ENCODE measurements at regions of chr10 and their contacts with region 1.

Region 1: GRCh38 chr10:93488956-93489528 is 6.9 kb upstream of the MYOF start:
- DNase-seq: no peak
- ATAC-seq: no peak; the same call in 1 of the 2 replicates
- H3K4me3 Mint-ChIP-seq: no peak overlapping the region
- H3K27ac Mint-ChIP-seq: no peak overlapping the region
- H3K4me1 Mint-ChIP-seq: no peaks in the 10 kb centered on the region; the same call in 1 of the 2 replicates
- H3K27me3 Mint-ChIP-seq: peaks cover 4% of the 10 kb centered on the region; the same call in 1 of the 2 replicates
- CTCF ChIP-seq: no peak

Region 2: DNA sequence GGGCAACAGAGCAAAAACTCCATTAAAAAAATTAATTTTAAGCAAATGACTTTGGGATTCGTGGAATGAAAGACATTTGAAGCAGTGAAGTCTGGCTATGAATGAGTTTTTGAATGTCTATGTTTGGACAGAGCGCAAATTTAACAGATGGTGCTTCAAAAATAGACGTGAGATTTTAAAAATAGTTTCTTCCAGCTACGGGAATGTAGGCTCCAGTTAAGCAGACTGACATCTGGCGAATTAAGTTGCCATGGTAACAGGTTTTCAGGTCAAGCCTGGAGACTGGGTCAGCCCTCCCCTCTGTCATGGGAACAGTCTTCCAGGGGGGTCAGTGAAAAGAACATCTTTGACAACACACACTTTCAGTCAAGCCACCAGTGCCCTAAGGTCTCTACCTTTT is 69.0 kb before region 1 on chr10:
- CTCF ChIA-PET with region 1: no interaction called
- POLR2A ChIA-PET with region 1: no interaction called
- DNase-seq: no peak
- ATAC-seq: peak; percentile 32
- H3K4me3 Mint-ChIP-seq: no peak overlapping the region
- H3K27ac Mint-ChIP-seq: peak overlapping the region; percentile 52; the same call in 1 of the 2 replicates
- H3K4me1 Mint-ChIP-seq: peaks cover 39% of the 10 kb centered on the region
- H3K27me3 Mint-ChIP-seq: no peaks in the 10 kb centered on the region
- CTCF ChIP-seq: no peak

Region 3: DNA sequence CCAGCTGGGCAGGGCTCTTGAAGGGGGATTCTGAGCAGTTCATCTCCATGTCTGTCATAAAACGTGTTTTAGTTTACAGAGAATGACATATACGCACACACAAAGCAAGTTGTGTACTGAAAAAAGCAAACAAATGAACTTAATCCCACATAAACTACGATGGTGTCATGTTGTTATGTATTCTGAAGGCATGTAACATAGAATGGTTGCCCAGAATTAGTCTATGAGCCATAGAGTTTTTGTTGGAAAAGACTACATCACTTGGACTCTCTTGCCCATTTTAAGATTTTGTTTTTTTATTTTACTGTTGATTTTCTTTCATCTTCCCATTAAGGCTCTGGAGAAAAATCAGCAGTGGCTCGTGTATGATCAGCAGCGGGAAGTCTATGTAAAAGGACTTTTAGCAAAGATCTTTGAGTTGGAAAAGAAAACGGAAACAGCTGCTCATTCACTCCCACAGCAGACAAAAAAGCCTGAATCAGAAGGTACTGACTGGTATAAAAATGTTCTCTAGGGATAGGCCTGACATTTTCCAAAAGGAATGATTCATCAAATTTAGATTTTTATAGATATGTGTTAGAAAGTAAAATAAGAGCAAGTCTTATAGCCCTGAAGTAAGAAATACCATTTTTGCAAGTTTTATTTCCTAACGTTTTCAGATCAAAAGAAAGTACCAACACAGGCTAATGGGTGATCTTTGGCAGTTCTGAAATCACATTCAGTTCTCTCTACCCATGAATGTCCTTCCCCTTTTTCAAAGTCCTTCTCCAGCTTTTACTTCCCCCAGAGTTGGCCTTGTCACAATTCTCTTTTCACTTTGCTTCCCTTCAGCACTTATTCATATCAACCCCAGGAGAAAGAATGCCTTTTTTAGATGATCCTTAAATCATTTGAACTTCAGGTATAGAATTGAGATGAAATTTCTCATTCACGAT is 26.3 kb after region 1 on chr10:
- CTCF ChIA-PET with region 1: interaction called, 30 read pairs
- POLR2A ChIA-PET with region 1: no interaction called
- DNase-seq: no peak
- ATAC-seq: no peak
- H3K4me3 Mint-ChIP-seq: no peak overlapping the region
- H3K27ac Mint-ChIP-seq: no peak overlapping the region
- H3K4me1 Mint-ChIP-seq: peaks cover 5% of the 10 kb centered on the region
- H3K27me3 Mint-ChIP-seq: no peaks in the 10 kb centered on the region
- CTCF ChIP-seq: no peak

Region 4: DNA sequence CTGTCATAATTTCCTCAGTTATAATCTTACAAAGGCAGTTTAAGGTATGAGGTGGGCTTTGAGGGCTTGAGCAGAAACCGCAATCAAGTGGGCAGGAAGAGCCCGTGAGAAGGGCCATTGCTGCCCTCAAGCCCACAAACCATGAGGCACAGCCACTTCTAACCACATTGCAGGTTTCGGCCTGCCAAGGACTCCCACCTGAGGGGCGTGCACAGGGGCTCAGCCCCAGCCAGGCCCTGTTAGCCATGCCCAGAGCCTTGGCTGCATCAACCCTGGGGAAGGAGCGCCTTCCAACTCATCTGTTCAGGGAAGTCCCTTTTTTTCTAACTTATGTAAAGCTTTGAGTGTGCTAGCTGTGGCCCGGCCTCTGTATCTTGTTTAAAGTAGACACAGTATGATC is 71.5 kb after region 1 on chr10:
- CTCF ChIA-PET with region 1: no interaction called
- POLR2A ChIA-PET with region 1: no interaction called
- DNase-seq: no peak
- ATAC-seq: no peak
- H3K4me3 Mint-ChIP-seq: no peak overlapping the region
- H3K27ac Mint-ChIP-seq: no peak overlapping the region
- H3K4me1 Mint-ChIP-seq: peaks cover 4% of the 10 kb centered on the region; the same call in 1 of the 2 replicates
- H3K27me3 Mint-ChIP-seq: peaks cover 29% of the 10 kb centered on the region
- CTCF ChIP-seq: no peak

Region 5: GRCh38 chr10:93600446-93601145 is 111.6 kb after region 1 on chr10:
- CTCF ChIA-PET with region 1: no interaction called
- POLR2A ChIA-PET with region 1: no interaction called
- DNase-seq: peak; percentile 29
- ATAC-seq: peak; percentile 12
- H3K4me3 Mint-ChIP-seq: peak overlapping the region; percentile 70
- H3K27ac Mint-ChIP-seq: no peak overlapping the region
- H3K4me1 Mint-ChIP-seq: peaks cover 11% of the 10 kb centered on the region
- H3K27me3 Mint-ChIP-seq: peaks cover 58% of the 10 kb centered on the region
- CTCF ChIP-seq: no peak

Region 6: DNA sequence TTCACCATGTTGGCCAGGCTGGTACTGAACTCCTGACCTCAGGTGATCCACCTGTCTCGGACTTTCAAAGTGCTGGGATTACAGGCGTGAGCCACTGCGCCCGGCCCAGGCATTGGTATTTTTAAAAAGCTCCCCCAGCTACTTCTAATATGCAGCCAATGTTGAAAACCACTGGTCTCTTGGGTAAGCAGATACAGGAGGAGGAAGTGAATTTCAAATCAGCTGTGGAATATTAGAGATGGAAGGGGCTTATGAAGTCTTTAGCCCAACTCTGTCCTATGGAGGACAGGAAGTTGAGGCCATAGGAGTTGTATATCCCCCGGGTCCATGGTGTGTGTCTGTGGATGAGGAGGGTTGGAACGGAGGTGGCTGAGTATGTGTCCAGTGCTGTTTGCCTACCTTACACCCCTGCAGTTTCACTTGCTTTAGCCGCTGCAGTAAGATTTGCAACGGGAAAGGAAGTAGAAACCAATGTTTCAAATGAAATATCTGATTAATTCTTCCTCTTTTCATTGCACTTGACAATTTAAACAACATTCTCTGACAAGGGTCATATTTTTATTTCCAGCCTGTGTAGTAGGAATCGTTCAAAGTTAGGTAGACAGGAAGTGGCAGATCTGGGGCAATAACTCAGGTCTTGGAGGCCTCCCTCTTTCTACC is 126.7 kb after region 1 on chr10:
- CTCF ChIA-PET with region 1: no interaction called
- POLR2A ChIA-PET with region 1: no interaction called
- DNase-seq: no peak
- ATAC-seq: no peak
- H3K4me3 Mint-ChIP-seq: no peak overlapping the region
- H3K27ac Mint-ChIP-seq: no peak overlapping the region
- H3K4me1 Mint-ChIP-seq: peaks cover 15% of the 10 kb centered on the region
- H3K27me3 Mint-ChIP-seq: peaks cover 4% of the 10 kb centered on the region; the same call in 1 of the 2 replicates
- CTCF ChIP-seq: no peak